Heart left ventricle (tissue), 16 donors: ENCODE measurements at regions of chr1 and their contacts with region 1.

Region 1: DNA sequence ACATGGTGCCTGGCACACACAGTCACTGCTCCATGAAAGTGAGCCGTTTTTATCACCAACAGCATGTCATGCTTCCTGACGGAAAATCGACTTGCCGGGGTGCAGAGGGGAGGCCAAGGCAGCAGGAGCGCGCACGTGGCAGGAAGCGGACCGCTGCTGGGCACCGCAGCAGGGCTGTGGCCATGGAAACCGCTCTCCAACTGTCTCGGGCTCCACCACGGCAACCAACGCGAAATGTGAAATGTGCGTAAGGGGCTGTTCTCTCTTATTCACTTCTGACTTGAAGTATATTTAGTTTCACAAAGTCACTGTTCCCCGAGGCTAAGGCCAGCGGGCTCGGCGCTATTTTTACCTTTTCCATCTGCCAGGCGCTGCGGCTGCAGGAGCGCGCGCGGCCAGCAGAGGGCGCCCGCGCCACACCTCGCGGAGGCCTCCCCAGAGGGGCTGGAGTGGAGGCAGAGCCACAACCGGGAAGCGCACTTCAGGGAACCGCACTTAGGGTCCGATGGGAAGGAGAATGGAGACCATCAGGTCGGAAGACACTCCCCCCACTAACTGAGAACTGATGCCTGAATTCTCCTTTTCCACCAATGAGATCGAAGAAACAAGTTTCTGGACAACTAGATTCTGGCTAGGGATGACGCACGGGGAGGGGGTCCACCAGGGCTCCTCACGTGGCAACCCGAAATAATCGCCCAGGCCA is 19.7 kb downstream of the RCC2 start:
- DNase-seq: peak; percentile 72 to 88 (median 76)
- ATAC-seq: peak; percentile 47 to 88 (median 84)
- H3K4me3 ChIP-seq: peak overlapping the region in 1 of 12 donors; percentile 13
- H3K27ac ChIP-seq: peak overlapping the region in 10 of 12 donors; percentile 36 to 81 (median 59)
- H3K4me1 ChIP-seq: peaks cover 0 to 29% (median 18%) of the 10 kb centered on the region in 12 donors
- H3K27me3 ChIP-seq: no peaks in the 10 kb centered on the region
- CTCF ChIP-seq: peak; percentile 99 to 100 (median 99)
- POLR2A ChIP-seq: peak in 1 of 2 donors; percentile 23

Region 2: DNA sequence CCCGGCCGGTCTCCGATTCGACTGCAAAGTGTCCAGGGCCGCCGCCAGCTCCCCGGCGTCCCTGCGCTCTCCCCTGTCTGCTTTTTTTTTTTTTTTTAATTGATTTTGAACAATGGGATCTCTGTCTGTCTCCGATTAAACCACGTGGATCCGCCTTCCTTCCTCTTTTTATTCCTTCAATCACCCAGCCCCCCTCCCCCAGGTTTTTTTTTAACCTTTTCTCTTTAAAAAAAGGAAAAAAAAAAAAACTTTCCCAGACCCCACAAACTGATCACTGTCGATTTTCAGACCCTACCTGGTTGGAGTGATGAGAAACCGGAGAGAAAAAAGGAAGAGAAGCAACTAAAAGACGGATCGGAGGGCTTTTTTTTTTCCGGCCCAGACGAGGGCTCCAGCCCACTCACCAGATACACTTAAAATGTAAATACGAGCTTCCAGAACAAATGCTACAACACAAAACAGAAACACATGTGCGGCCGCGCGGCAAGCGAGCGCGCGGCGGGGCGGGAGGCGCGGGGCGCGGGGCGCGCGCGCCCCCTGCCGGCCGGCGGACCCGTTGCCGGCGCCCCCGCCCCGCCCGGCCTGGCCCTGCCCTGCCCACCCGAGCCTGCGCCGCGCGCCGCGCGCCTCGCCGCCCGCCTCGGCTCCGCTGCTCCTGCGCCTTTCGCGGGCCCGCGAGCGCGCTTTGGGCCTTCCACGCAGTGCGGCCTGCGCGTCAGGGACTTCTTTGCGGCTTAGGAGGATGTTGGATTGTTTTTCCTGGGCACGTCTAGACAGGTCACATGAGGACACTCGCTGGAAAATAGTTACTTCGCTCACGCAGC is 19.7 kb after region 1 on chr1 and contains the start of gene RCC2:
- intact Hi-C with region 1: loop called in 2 of 10 experiments (anchors 1 to 2 kb)
- DNase-seq: peak; percentile 70 to 87 (median 77)
- ATAC-seq: peak; percentile 28 to 83 (median 67)
- H3K4me3 ChIP-seq: peak within 1 kb of the TSS; percentile 56 to 95 (median 80)
- H3K27ac ChIP-seq: peak within 1 kb of the TSS; percentile 36 to 93 (median 84)
- H3K4me1 ChIP-seq: peaks cover 0 to 35% (median 16%) of the 10 kb centered on the region in 12 donors
- H3K27me3 ChIP-seq: no peaks in the 10 kb centered on the region
- CTCF ChIP-seq: no peak
- POLR2A ChIP-seq: no peak
- total RNA-seq, gene RCC2: 7.9 to 39.1 (median 14.3) TPM

Region 3: DNA sequence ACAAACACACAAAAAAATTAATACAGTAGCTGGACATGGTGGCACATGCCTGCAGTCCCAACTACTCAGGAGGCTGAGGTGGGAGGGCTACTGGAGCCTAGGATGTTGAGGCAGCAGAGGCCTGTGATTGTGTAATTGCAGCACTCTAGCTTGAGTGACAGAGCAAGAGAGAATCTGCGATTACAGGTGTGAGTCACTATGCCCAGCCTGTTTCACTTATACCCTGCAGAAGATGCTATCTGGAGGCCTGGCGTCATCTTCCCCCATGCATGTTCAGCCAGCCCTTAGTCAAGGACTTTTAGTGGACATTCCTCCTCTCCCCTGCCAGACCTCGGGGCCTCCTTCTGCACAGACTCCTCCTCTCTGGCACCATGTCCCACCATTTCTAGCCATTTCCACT is 56.0 kb after region 1 on chr1:
- intact Hi-C with region 1: loop called in 7 of 10 experiments (anchors 5 kb)
- DNase-seq: peak in 2 of 5 donors; percentile 34 to 83
- ATAC-seq: peak; percentile 63 to 98 (median 92)
- H3K4me3 ChIP-seq: no peak overlapping the region
- H3K27ac ChIP-seq: peak overlapping the region in 2 of 12 donors; percentile 30 to 42
- H3K4me1 ChIP-seq: peaks cover 0 to 4% (median 0%) of the 10 kb centered on the region in 12 donors
- H3K27me3 ChIP-seq: no peaks in the 10 kb centered on the region
- CTCF ChIP-seq: no peak
- POLR2A ChIP-seq: no peak

Region 4: DNA sequence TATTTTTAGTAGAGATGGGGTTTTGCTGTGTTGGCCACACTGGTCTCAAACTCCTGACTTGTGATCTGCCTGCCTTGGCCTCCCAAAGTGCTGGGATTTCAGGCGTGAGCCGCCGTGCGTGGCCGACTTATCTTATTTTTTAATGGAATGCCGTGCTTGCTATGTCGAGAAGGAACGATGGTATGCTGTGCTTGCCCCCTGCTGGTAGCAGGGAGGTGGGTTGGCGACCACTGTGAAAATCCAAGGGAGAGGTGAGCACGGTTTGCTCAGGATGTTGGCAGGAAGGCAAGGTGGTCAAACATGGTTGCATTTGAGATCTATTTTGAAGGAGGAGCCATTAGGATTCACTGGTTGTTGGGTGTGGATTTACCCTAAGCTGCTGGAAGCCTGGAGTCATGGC is 65.5 kb after region 1 on chr1:
- intact Hi-C with region 1: loop called in 4 of 10 experiments (anchors 5 kb)
- DNase-seq: peak in 1 of 5 donors; percentile 17
- ATAC-seq: no peak
- H3K4me3 ChIP-seq: no peak overlapping the region
- H3K27ac ChIP-seq: no peak overlapping the region
- H3K4me1 ChIP-seq: no peaks in the 10 kb centered on the region
- H3K27me3 ChIP-seq: peaks cover 0 to 11% (median 0%) of the 10 kb centered on the region in 9 donors
- CTCF ChIP-seq: peak in 10 of 12 donors; percentile 9 to 46 (median 28)
- POLR2A ChIP-seq: no peak

Region 5: DNA sequence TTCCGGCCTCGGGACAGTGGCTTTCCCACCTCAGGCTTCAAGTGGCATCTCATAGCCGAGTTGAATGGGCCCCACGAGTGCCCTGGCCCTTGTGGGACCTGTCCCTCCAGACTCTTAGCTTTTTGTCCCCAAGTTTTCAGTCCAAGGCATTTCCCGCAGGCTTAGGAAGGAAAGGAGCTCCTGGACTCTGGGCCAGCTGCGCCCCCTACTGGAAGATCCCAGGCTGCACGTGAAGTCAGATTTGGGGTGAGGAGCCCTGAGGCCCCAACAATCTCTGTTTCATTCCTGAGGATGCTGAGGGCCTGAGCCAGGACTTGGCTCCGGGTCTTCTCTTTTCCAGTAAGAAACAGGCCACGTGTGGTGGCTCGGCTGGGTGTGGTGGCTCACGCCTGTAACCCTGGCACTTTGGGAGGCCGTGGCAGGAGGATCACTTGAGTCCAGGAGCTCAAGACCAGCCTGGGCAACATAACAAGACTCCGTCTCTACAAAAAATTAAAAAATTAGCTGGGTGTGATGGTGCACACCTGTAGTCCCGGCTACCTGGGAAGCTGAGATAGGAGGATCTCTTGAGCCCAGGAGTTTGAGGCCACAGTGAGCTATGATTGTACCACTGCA is 187.2 kb after region 1 on chr1:
- intact Hi-C with region 1: loop called in 8 of 10 experiments (anchors 5 to 10 kb)
- DNase-seq: peak; percentile 59 to 85 (median 72)
- ATAC-seq: peak; percentile 7 to 59 (median 49)
- H3K4me3 ChIP-seq: no peak overlapping the region
- H3K27ac ChIP-seq: peak overlapping the region in 11 of 12 donors; percentile 39 to 95 (median 82)
- H3K4me1 ChIP-seq: peaks cover 3 to 25% (median 19%) of the 10 kb centered on the region in 12 donors
- H3K27me3 ChIP-seq: no peaks in the 10 kb centered on the region
- CTCF ChIP-seq: peak; percentile 83 to 93 (median 88)
- POLR2A ChIP-seq: no peak

Region 6: DNA sequence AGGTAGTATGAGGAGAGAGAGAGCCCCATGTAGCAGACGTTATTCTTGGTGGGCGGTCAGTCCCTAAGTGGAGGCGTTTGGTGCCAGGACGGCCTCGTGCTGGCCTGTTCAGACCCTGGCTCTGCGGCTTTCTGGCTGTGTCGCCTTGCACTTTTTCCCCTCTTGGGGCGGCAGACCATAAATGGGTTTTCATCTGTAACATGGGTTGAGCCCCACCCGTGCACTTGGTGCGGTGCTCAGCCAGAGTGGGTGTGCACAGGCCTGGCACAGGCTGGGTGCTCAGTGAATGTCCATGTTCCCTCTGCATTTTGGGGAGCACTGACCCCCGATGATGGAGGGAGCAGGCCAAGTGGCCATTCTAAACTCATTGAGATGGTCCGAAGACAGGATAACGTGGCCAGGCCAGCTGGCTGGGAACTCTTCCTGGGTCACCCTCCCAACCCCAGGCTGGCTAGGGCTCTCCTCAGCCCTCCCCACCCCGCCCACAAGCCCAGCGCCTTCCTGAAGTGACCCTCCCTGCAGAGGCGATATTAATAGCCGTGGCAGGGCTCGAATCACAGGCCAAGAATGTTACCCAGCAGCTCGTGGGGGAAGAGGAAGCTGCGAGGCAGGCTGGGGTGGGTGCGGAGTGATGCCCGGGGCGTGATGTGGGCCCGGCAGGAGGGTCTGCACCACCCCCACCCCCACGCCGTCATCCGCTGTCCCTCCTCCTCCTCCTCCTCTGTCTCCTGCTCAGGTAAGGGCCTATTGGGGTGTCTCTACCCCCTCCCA is 198.2 kb after region 1 on chr1:
- intact Hi-C with region 1: loop called in 2 of 10 experiments (anchors 10 kb)
- DNase-seq: peak; percentile 73 to 88 (median 83)
- ATAC-seq: peak; percentile 84 to 91 (median 89)
- H3K4me3 ChIP-seq: peak overlapping the region; percentile 27 to 63 (median 52)
- H3K27ac ChIP-seq: peak overlapping the region; percentile 80 to 98 (median 88)
- H3K4me1 ChIP-seq: peaks cover 0 to 65% (median 22%) of the 10 kb centered on the region in 12 donors
- H3K27me3 ChIP-seq: no peaks in the 10 kb centered on the region
- CTCF ChIP-seq: no peak
- POLR2A ChIP-seq: peak in 1 of 2 donors; percentile 57

Region 7: DNA sequence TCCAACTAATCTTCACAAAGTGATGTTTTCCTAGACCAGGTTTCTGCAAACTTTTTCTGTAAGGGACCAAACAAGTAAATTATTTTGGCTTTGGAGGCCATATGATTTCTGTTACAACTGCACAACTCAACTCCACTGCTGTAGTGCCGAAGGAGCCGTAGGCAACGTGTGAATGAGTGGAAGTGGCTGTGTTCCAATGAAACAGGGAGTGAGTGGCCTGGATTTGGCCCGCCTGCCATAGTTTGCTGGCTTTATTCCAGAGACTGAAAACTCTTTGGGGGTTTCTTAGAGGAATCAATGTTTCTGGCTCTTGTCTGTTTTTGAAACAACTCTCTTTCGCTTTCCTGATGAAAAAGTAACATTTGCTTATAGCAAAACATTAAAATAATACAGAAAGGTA is 322.8 kb after region 1 on chr1:
- intact Hi-C with region 1: no loop called
- DNase-seq: peak in 3 of 5 donors; percentile 38 to 54 (median 45)
- ATAC-seq: peak in 3 of 4 donors; percentile 48 to 72 (median 57)
- H3K4me3 ChIP-seq: no peak overlapping the region
- H3K27ac ChIP-seq: no peak overlapping the region
- H3K4me1 ChIP-seq: peaks cover 0 to 12% (median 0%) of the 10 kb centered on the region in 12 donors
- H3K27me3 ChIP-seq: peaks cover 0 to 23% (median 2%) of the 10 kb centered on the region in 9 donors
- CTCF ChIP-seq: no peak
- POLR2A ChIP-seq: no peak